ENCODE measurements at regions of chr22 and their contacts with region 1.

Region 1: DNA sequence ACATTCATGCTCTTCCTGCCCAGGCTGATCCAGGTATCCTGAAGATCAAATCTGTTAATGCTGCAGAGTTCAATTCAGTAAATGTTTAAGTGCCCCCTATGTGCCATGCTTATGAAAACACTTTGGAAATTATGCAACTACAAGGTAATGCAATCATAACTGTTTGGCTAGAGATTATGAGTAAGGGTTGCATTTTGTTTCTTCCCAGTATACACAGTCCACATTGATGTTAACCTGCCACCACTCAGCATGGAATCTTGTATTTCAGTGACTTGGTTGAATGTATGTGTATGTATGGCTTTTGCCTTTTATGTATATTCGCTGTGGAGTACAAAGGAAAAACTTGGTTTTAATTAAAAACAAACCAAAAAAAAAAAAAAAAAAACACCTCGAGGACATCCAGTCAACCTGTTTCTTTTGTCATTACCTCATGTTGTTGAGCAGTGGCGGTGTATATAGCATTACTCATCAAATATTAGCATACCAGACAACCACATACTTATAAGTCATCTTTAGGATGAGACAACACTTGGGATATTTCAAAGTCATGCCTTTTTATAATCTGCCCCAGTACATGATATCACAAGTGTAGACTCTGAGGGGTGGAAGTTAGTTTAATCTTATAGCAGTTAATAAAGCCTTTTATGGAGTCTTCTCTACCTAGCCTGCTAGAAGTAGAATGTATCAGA is 86.1 kb upstream of the HORMAD2 start:
- DNase-seq: no peak
- ATAC-seq: no peak
- H3K4me3 ChIP-seq: no peak overlapping the region
- H3K27ac ChIP-seq: no peak overlapping the region
- H3K4me1 ChIP-seq: peaks cover 6% of the 10 kb centered on the region
- H3K27me3 ChIP-seq: no peaks in the 10 kb centered on the region

Region 2: GRCh38 chr22:29647954-29648737 is 346.0 kb before region 1 on chr22:
- intact Hi-C with region 1: no loop called
- DNase-seq: no peak
- ATAC-seq: no peak
- H3K4me3 ChIP-seq: no peak overlapping the region
- H3K27ac ChIP-seq: no peak overlapping the region
- H3K4me1 ChIP-seq: no peaks in the 10 kb centered on the region
- H3K27me3 ChIP-seq: no peaks in the 10 kb centered on the region

Region 3: GRCh38 chr22:29663180-29663821 is 330.9 kb before region 1 on chr22:
- intact Hi-C with region 1: no loop called
- DNase-seq: no peak
- ATAC-seq: no peak
- H3K4me3 ChIP-seq: no peak overlapping the region
- H3K27ac ChIP-seq: no peak overlapping the region
- H3K4me1 ChIP-seq: no peaks in the 10 kb centered on the region
- H3K27me3 ChIP-seq: no peaks in the 10 kb centered on the region

Region 4: GRCh38 chr22:29837780-29838598 is 156.2 kb before region 1 on chr22 and contains the start of gene ASCC2:
- intact Hi-C with region 1: no loop called
- DNase-seq: peak; percentile 100
- ATAC-seq: peak; percentile 99
- H3K4me3 ChIP-seq: peak within 1 kb of the TSS; percentile 77
- H3K27ac ChIP-seq: peak within 1 kb of the TSS; percentile 61
- H3K4me1 ChIP-seq: peaks cover 6% of the 10 kb centered on the region
- H3K27me3 ChIP-seq: no peaks in the 10 kb centered on the region
- total RNA-seq, gene ASCC2: 31.2 to 41.4 (median 40.2) TPM

Region 5: GRCh38 chr22:29883045-29883774 is 111.0 kb before region 1 on chr22 and contains the start of gene MTMR3:
- intact Hi-C with region 1: loop called in 1 of 4 experiments (anchors 10 kb)
- DNase-seq: peak; percentile 95 to 98 (median 98)
- ATAC-seq: peak; percentile 94 to 96
- H3K4me3 ChIP-seq: peak within 1 kb of the TSS; percentile 93
- H3K27ac ChIP-seq: peak within 1 kb of the TSS; percentile 94
- H3K4me1 ChIP-seq: no peaks in the 10 kb centered on the region
- H3K27me3 ChIP-seq: no peaks in the 10 kb centered on the region
- total RNA-seq, gene MTMR3: 30.3 to 38.0 (median 33.6) TPM

Region 6: DNA sequence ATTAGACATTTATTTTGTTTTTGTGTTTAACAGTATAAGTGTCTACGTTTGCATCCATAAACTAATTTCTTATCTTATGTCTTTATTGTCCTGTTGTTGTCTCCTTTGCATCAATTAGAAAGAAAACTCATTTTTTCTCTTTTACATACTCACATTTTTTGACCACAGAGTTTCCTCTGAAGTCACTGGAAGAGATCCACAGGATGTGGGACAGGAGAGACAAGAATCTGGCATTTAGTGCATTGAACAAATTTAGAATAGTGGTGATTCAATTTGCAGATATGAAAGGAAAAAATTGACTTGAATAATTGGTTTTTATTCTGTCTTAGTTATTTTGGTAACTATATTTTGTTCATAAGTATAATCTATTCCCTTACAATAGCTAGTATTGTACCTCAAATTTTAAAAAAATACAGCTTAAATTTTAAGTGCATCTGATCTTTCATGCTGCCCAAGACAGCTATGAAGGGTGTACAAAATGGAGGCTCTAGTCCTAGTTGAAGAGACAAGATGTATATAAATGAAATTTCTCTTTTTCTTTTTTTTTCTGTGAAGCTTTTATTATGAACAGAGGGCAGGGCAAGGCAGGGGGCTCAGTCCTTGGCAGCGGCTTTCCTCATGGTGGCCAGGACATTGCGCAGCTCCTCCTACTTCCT is 110.5 kb after region 1 on chr22:
- intact Hi-C with region 1: no loop called
- DNase-seq: no peak
- ATAC-seq: no peak
- H3K4me3 ChIP-seq: no peak overlapping the region
- H3K27ac ChIP-seq: no peak overlapping the region
- H3K4me1 ChIP-seq: no peaks in the 10 kb centered on the region
- H3K27me3 ChIP-seq: no peaks in the 10 kb centered on the region